ENCODE measurements at regions of chr1 and their contacts with region 1.

Region 1: GRCh38 chr1:35737120-35737519 is 18.4 kb upstream of the C1orf216 start:
- DNase-seq: no peak
- ATAC-seq: no peak
- H3K4me3 ChIP-seq: no peak overlapping the region
- H3K4me3 Mint-ChIP-seq: no peak overlapping the region
- H3K27ac ChIP-seq: no peak overlapping the region
- H3K27ac Mint-ChIP-seq: no peak overlapping the region
- H3K4me1 ChIP-seq: no peaks in the 10 kb centered on the region
- H3K4me1 Mint-ChIP-seq: no peaks in the 10 kb centered on the region
- H3K27me3 ChIP-seq: no peaks in the 10 kb centered on the region
- H3K27me3 Mint-ChIP-seq: no peaks in the 10 kb centered on the region
- CTCF ChIP-seq: no peak

Region 2: DNA sequence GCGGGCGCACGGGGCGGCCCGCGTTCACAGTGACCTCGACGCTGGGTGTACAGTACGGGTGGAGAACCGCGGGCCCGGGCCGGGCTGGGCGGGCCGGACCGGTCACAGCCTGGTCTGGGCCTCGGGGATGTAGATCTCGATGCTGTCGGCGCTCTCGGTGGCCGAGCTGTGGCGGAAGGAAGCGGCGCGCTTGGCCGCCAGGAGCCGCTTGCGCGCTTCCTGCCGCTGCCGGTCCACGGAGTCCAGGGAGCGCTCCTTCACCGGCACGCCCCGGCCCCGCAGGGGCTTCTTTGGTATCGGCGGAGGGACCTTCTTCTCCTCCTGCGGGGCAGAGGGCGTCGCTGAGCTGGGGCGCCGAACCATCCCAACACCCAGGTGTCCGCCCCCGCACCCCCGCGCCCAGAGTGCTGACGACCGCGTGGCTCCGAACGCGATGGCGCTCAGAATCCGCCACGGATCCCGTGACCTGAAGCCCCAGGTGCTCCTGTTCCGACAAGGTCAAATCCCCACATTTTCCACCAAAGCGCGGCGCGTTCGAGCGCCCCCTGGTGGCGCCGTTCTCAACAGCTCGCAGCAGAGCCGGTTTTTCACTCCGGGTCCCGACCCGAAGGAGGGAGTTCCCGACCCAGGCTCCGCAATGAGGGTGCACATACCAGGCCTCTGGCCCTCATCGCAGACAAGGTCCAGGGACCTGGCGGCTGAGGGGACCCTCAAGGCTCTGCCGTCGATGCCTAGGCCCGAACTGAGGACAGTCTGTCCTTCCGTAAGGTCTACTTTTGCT is 870.9 kb before region 1 on chr1:
- CTCF ChIA-PET with region 1: no interaction called
- POLR2A ChIA-PET with region 1: no interaction called
- intact Hi-C with region 1: no loop called
- DNase-seq: peak; percentile 83 to 98 (median 92)
- ATAC-seq: peak; percentile 82
- H3K4me3 ChIP-seq: peak overlapping the region; percentile 68 to 78
- H3K4me3 Mint-ChIP-seq: peak overlapping the region; percentile 88
- H3K27ac ChIP-seq: peak overlapping the region; percentile 67 to 87
- H3K27ac Mint-ChIP-seq: peak overlapping the region; percentile 87
- H3K4me1 ChIP-seq: peaks cover 56% of the 10 kb centered on the region
- H3K4me1 Mint-ChIP-seq: peaks cover 44% of the 10 kb centered on the region
- H3K27me3 ChIP-seq: no peaks in the 10 kb centered on the region
- H3K27me3 Mint-ChIP-seq: no peaks in the 10 kb centered on the region
- CTCF ChIP-seq: peak; percentile 97

Region 3: DNA sequence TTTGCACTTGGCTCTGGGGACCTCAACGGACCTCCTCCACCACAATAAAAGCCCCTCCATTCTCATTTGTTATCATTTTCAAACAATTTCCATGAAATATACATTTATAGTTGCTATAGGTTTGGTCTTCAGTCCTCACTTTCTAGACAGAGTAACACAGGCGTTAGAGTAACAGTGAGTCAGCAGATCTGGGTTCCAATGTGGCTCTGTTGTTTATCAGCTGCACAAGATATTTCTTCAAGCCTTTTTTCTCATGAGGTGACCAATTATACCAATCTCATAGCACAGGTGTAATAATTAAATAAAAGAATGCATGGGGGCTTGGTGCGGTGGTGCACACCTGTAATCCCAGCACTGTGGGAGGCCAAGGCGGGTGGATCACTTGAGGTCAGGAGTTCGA is 63.0 kb before region 1 on chr1:
- CTCF ChIA-PET with region 1: no interaction called
- POLR2A ChIA-PET with region 1: no interaction called
- intact Hi-C with region 1: loop called in 1 of 2 experiments (anchors 5 kb)
- DNase-seq: no peak
- ATAC-seq: no peak
- H3K4me3 ChIP-seq: no peak overlapping the region
- H3K4me3 Mint-ChIP-seq: no peak overlapping the region
- H3K27ac ChIP-seq: no peak overlapping the region
- H3K27ac Mint-ChIP-seq: no peak overlapping the region
- H3K4me1 ChIP-seq: no peaks in the 10 kb centered on the region
- H3K4me1 Mint-ChIP-seq: no peaks in the 10 kb centered on the region
- H3K27me3 ChIP-seq: no peaks in the 10 kb centered on the region
- H3K27me3 Mint-ChIP-seq: peaks cover 17% of the 10 kb centered on the region
- CTCF ChIP-seq: no peak